Common myeloid progenitor, CD34-positive (primary cell): ENCODE measurements at regions of chr16 and their contacts with region 1.

Region 1: DNA sequence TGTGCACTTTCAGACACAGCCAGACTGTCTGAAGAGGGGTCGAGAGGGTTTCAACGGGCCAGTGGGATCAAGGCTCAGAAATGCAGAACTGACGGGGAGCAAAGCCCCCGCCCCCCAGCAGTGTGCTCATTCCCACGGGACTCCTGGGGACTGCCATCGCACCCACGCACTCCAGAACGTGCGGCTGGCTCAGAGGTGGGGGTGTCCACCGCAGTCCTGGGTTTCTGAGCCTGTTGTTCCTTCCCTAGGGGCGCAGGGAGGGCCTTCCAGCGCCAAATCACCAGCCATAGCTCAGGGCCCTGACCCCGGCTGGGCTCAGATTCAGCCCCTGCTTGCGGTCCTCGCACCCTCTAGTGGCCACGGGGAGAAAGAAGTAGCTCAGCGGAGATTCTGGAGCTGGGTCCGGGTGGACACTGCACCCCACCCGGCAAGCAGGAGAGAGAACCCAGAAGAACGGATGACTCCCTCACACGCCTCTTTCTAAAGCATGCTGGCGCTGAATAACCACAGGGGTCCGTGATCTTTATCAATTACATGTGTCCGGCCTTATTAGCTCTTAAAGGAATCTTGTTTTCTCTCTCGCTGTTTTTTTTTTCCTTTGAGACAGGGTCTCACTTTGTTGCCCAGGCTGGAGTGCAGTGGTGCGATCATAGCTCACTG is 45.0 kb upstream of the USP7 start:
- DNase-seq: peak; percentile 76 to 83 (median 83)
- H3K4me3 ChIP-seq: peak overlapping the region in 5 of 7 experiments; percentile 23 to 60 (median 56)
- H3K27ac ChIP-seq: no peak overlapping the region
- H3K4me1 ChIP-seq: peaks cover 0 to 8% (median 6%) of the 10 kb centered on the region in 4 experiments
- H3K27me3 ChIP-seq: peaks cover 0 to 2% (median 0%) of the 10 kb centered on the region in 5 experiments

Region 2: GRCh38 chr16:8908810-8909468 is 99.8 kb before region 1 on chr16:
- CTCF ChIA-PET with region 1: interaction called, 11 read pairs
- POLR2A ChIA-PET with region 1: no interaction called
- DNase-seq: no peak
- H3K4me3 ChIP-seq: no peak overlapping the region
- H3K27ac ChIP-seq: no peak overlapping the region
- H3K4me1 ChIP-seq: no peaks in the 10 kb centered on the region
- H3K27me3 ChIP-seq: no peaks in the 10 kb centered on the region

Region 3: GRCh38 chr16:9039210-9039609 is 30.5 kb after region 1 on chr16:
- CTCF ChIA-PET with region 1: no interaction called
- POLR2A ChIA-PET with region 1: no interaction called
- DNase-seq: peak; percentile 20 to 75 (median 63)
- H3K4me3 ChIP-seq: no peak overlapping the region
- H3K27ac ChIP-seq: no peak overlapping the region
- H3K4me1 ChIP-seq: no peaks in the 10 kb centered on the region
- H3K27me3 ChIP-seq: no peaks in the 10 kb centered on the region

Region 4: DNA sequence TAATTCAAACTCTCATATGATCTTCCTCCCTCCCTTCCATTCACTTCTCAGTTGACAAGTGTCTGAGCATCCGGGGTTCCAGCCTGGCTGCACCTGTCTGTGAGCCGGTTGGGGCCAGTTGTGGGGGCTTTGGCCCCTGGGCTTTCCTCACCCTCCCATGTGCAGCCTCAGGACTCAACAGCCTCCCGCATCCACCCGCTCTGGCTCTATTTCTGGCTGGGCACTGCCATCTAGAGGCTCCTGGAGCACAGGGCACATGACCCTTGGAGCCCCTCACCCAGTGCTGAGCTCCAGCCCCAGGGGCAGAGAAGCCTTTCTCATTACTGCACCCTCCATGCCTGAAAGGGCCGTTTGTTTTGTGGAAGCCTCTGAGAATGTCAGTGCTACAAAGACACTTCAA is 126.0 kb after region 1 on chr16:
- CTCF ChIA-PET with region 1: interaction called, 33 read pairs
- POLR2A ChIA-PET with region 1: no interaction called
- DNase-seq: peak; percentile 64 to 81 (median 78)
- H3K4me3 ChIP-seq: no peak overlapping the region
- H3K27ac ChIP-seq: no peak overlapping the region
- H3K4me1 ChIP-seq: peaks cover 0 to 20% (median 14%) of the 10 kb centered on the region in 4 experiments
- H3K27me3 ChIP-seq: peaks cover 0 to 2% (median 0%) of the 10 kb centered on the region in 5 experiments